ENCODE measurements at regions of chr19 and their contacts with region 1.

Region 1: DNA sequence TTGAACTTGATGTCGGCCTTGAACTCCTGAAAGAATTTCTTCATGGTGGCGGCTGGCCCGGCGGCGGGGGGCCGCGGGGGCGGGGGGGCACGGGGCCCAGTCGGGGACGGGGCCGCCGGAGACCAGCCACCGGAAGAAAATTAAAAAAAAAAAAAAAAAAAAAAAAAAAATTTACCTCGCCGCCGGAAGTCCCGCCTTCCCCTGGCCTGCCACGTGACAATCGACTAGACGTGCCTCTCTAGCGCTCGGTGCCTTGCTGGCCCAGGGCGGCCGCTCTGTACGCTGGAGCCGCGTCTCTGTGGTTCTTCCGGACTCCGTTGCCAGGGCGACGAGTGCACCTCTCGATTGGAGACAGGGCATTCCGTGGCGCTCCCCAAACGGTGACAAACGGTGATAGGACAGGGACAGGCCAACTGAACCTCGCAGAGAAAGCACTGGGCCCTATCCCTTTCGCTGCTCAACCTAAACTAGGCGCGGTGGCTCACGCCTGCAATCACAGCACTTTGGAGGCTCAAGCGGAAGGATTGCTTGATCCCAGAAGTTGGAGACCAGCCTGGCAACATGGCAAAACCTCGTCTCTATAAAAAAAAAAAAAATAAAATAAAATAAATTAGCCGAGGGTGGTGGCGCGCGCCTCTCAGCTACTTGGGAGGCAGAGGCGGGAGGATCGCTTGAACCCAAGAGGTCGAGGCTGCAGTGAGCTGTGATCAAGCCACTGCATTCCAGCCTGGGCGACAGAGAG is at the start of gene UBXN6:
- DNase-seq: peak; percentile 98
- ATAC-seq: peak; percentile 95
- H3K4me3 ChIP-seq: peak within 1 kb of the TSS; percentile 52 to 76 (median 64)
- H3K4me3 Mint-ChIP-seq: peak within 1 kb of the TSS; percentile 89
- H3K27ac ChIP-seq: peak within 1 kb of the TSS; percentile 60 to 74
- H3K27ac Mint-ChIP-seq: peak within 1 kb of the TSS; percentile 95
- H3K4me1 ChIP-seq: peaks cover 9 to 19% of the 10 kb centered on the region in 2 donors
- H3K4me1 Mint-ChIP-seq: peaks cover 24% of the 10 kb centered on the region
- H3K27me3 ChIP-seq: no peaks in the 10 kb centered on the region
- H3K27me3 Mint-ChIP-seq: no peaks in the 10 kb centered on the region
- CTCF ChIP-seq: no peak
- total RNA-seq, gene UBXN6: 75.8 and 82.0 TPM in 2 replicates

Region 2: DNA sequence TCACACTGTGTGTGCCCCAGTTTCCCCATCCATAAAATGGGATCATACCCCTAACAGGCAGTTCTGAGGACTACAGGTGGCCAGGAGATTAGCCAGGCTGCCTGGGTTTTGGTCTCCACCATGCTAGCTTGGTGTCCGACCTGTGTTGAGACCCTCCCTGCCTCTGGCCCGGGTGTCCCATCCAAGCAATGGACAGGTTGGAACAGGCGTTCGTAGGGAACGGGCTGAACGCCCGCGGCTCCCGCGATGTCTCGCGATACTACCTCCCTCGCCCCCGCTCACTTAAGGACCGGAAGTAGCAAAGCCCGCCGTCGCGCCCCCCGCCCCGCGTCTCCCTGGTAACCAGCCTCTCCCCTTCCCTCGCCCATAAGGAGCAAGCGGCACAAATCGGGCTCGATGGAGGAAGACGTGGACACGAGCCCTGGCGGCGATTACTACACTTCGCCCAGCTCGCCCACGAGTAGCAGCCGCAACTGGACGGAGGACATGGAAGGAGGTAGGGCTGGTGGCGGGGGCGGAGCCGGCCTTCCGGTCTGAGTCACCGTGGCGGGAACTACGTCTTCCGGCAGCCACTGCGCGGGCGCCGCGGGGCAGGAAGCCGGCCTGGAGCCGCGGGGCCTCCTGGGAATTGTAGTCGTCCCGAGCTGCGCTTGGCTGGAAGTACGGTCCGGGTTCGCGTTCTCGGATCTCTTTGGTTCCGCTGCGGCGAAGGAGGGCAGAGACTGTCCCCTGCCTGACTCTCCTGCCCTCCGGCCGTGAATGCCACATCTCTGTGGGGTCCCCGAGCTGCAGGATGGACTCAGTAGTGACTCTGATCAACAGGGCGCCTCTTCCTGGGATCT is 1022.9 kb before region 1 on chr19:
- CTCF ChIA-PET with region 1: no interaction called
- POLR2A ChIA-PET with region 1: no interaction called
- intact Hi-C with region 1: loop called (anchors 5 kb)
- DNase-seq: peak; percentile 99
- ATAC-seq: peak; percentile 92
- H3K4me3 ChIP-seq: peak overlapping the region; percentile 55 to 89 (median 78)
- H3K4me3 Mint-ChIP-seq: peak overlapping the region; percentile 100
- H3K27ac ChIP-seq: peak overlapping the region; percentile 87 to 96
- H3K27ac Mint-ChIP-seq: peak overlapping the region; percentile 99
- H3K4me1 ChIP-seq: peaks cover 9 to 15% of the 10 kb centered on the region in 2 donors
- H3K4me1 Mint-ChIP-seq: peaks cover 13% of the 10 kb centered on the region
- H3K27me3 ChIP-seq: no peaks in the 10 kb centered on the region
- H3K27me3 Mint-ChIP-seq: no peaks in the 10 kb centered on the region
- CTCF ChIP-seq: no peak

Region 3: GRCh38 chr19:4246767-4247593 is 210.8 kb before region 1 on chr19 and contains the start of gene YJU2:
- CTCF ChIA-PET with region 1: no interaction called
- POLR2A ChIA-PET with region 1: no interaction called
- intact Hi-C with region 1: loop called (anchors 2 kb)
- DNase-seq: peak; percentile 99
- ATAC-seq: peak; percentile 94
- H3K4me3 ChIP-seq: peak within 1 kb of the TSS; percentile 86 to 99 (median 98)
- H3K4me3 Mint-ChIP-seq: peak within 1 kb of the TSS; percentile 91
- H3K27ac ChIP-seq: peak within 1 kb of the TSS; percentile 99 to 100
- H3K27ac Mint-ChIP-seq: peak within 1 kb of the TSS; percentile 95
- H3K4me1 ChIP-seq: peaks cover 12 to 24% of the 10 kb centered on the region in 2 donors
- H3K4me1 Mint-ChIP-seq: peaks cover 23% of the 10 kb centered on the region
- H3K27me3 ChIP-seq: no peaks in the 10 kb centered on the region
- H3K27me3 Mint-ChIP-seq: no peaks in the 10 kb centered on the region
- CTCF ChIP-seq: peak; percentile 40
- total RNA-seq, gene YJU2: 39.8 and 40.3 TPM in 2 replicates

Region 4: GRCh38 chr19:4342615-4343369 is 115.0 kb before region 1 on chr19:
- CTCF ChIA-PET with region 1: no interaction called
- POLR2A ChIA-PET with region 1: no interaction called
- intact Hi-C with region 1: loop called (anchors 1 kb)
- DNase-seq: peak; percentile 97
- ATAC-seq: peak; percentile 85
- H3K4me3 ChIP-seq: peak overlapping the region; percentile 63 to 89 (median 81)
- H3K4me3 Mint-ChIP-seq: peak overlapping the region; percentile 90
- H3K27ac ChIP-seq: peak overlapping the region; percentile 64 to 82
- H3K27ac Mint-ChIP-seq: peak overlapping the region; percentile 69
- H3K4me1 ChIP-seq: peaks cover 10 to 32% of the 10 kb centered on the region in 2 donors
- H3K4me1 Mint-ChIP-seq: peaks cover 27% of the 10 kb centered on the region
- H3K27me3 ChIP-seq: no peaks in the 10 kb centered on the region
- H3K27me3 Mint-ChIP-seq: no peaks in the 10 kb centered on the region
- CTCF ChIP-seq: no peak

Region 5: DNA sequence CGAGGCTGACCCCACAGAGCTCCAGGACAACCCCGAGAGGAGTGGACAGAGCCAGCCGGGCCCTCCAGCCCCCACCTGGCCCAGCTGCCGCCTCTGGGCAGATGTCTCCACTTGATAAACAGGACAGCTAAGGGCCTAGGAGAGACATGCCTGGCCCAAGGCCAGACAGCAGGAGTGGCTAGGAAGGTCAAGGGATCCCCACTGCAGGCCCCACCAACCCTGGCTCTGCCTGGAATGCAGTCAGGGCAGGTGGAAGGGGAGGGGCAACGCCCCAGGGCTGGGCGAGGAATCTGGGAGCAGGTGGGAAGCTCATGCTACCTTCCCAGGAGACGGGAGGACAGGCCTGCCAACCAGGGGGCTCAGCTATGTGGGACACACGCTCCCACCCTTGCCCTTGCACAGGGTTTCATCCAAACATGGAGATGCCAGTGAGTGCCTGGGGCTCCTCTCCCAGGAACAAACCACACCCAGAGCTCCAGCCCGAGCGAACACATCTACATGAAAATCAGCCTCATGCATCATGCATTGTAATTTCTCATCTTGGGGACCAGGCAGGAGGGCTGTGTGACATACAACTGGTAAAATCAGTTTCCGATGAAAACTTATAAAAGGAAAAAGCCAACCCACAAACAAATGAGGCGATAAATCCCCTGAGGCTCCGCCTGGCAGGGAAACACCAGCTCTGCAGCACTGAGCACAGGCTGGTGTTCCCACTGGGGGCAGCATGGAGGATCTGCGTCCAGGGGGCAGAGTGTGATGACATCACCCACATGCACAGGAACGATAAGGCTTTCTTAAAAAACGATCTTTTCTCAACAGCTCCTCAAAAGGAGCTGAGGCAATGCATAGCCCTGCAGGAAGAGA is 82.4 kb before region 1 on chr19:
- CTCF ChIA-PET with region 1: no interaction called
- POLR2A ChIA-PET with region 1: no interaction called
- intact Hi-C with region 1: loop called (anchors 5 kb)
- DNase-seq: peak; percentile 85
- ATAC-seq: peak; percentile 70
- H3K4me3 ChIP-seq: peak overlapping the region in 3 of 5 experiments; percentile 38 to 56 (median 39)
- H3K4me3 Mint-ChIP-seq: peak overlapping the region; percentile 84
- H3K27ac ChIP-seq: peak overlapping the region; percentile 58 to 63
- H3K27ac Mint-ChIP-seq: peak overlapping the region; percentile 87
- H3K4me1 ChIP-seq: peaks cover 100% of the 10 kb centered on the region in 2 donors
- H3K4me1 Mint-ChIP-seq: peaks cover 88% of the 10 kb centered on the region
- H3K27me3 ChIP-seq: no peaks in the 10 kb centered on the region
- H3K27me3 Mint-ChIP-seq: no peaks in the 10 kb centered on the region
- CTCF ChIP-seq: peak; percentile 63

Region 6: DNA sequence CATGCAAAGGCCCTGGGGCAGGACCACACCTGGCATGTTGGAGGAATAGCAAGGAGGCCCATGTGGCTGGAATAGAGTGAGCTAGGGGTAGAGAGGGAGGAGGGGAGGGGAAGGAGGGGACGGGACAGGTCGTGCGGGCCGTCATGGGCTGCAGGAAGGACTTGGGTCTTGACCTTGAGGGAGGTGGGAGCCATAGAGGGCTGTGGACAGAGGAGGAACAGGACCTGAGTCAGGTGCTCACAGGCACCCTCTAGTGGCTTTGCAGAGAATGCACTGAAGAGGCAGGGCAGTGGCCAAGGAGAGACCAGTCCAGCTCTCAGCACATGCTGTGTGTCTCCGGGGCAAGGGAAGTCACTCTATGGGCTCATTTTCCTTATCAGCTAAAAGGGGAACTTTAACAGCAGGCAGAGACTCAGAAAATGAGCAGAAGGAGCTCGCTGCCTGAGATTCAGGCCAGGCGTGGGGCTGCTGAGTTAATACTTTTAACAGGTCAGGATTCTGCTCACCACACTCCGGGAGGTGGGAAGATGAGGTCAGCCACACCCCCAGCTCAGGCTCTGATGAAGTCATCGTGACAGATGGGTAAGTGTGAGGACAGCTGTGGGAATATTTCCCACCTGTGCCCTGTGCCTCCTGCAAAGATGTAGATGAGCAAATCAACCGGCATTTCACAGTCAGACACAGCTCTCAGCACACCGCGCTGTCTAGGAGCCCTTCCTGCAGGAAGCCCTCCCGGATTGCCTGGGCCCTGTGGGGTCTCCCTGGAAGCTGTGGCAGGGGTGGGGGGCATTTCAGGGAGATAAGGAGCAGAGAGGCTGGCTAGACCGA is 175.5 kb after region 1 on chr19:
- CTCF ChIA-PET with region 1: no interaction called
- POLR2A ChIA-PET with region 1: interaction called, 13 read pairs
- intact Hi-C with region 1: no loop called
- DNase-seq: peak; percentile 65
- ATAC-seq: peak; percentile 55
- H3K4me3 ChIP-seq: no peak overlapping the region
- H3K4me3 Mint-ChIP-seq: peak overlapping the region; percentile 50
- H3K27ac ChIP-seq: no peak overlapping the region
- H3K27ac Mint-ChIP-seq: no peak overlapping the region
- H3K4me1 ChIP-seq: peaks cover 8 to 35% of the 10 kb centered on the region in 2 donors
- H3K4me1 Mint-ChIP-seq: peaks cover 17% of the 10 kb centered on the region
- H3K27me3 ChIP-seq: peaks cover 0 to 3% (median 0%) of the 10 kb centered on the region in 4 experiments
- H3K27me3 Mint-ChIP-seq: peaks cover 13% of the 10 kb centered on the region
- CTCF ChIP-seq: peak; percentile 79

Measured in B cell (primary cell).